Cardiac septum (tissue), 1 donor: ENCODE measurements at regions of chr7 and their contacts with region 1.

Region 1: DNA sequence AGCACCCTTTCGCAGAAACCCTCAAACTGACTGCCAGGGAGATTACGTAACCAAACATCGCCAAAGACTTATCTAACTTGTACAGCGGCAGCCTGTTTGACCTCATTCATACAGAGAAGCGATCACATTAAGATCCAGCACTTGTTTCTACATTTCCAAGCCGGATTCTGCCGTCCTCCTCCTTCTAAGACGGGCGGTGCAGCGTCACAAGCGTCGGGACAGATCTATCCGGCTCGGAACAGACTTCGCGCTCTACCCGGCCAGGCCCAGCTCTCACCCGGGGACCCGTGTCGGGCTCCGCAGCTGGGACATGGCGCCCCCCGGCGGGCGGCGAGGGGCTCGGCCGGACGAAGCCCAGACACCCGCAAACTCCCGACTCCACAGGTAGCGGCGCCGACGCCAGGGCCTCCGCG is 373 bp downstream of the H2AZ2 start:
- DNase-seq: peak; percentile 96

Region 2: DNA sequence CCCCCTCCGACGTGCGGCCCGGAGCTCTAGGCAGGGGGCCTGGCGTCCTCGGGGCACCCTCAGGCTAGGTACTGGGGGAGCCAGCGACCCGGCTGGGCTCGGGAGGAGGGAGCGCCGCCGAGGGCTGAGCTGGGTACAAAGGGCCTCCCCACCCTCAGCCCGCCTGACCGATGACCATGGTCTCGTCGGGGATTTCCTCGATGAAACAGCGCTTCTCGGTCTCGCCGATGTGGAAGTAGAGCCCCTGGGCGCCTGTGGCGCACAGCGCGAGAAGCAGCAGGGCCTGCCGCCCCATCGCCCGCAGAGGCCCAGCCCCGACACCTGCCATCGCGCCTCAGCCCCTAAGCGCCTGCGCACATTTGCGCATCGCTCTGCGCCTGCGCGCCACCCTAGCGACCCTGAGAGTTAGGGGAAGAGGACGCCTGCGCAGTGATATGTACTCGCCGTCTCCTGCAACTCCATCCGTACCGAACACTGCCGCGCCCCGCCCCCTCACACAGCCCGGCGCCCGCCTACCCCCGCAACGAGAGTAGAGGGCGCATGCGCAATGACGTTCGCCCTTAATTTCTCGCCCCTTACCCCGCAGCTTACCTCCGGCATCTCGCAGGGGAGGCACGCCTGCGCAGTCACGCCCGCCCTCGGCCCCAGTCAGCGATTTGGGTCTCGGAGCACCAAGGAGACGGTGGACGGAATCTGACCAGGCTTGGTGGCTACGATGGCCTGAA is 265.5 kb before region 1 on chr7 and contains the start of gene TMED4:
- intact Hi-C with region 1: loop called (anchors 1 kb)
- DNase-seq: peak; percentile 100
- total RNA-seq, gene TMED4: 73.8 TPM

Region 3: DNA sequence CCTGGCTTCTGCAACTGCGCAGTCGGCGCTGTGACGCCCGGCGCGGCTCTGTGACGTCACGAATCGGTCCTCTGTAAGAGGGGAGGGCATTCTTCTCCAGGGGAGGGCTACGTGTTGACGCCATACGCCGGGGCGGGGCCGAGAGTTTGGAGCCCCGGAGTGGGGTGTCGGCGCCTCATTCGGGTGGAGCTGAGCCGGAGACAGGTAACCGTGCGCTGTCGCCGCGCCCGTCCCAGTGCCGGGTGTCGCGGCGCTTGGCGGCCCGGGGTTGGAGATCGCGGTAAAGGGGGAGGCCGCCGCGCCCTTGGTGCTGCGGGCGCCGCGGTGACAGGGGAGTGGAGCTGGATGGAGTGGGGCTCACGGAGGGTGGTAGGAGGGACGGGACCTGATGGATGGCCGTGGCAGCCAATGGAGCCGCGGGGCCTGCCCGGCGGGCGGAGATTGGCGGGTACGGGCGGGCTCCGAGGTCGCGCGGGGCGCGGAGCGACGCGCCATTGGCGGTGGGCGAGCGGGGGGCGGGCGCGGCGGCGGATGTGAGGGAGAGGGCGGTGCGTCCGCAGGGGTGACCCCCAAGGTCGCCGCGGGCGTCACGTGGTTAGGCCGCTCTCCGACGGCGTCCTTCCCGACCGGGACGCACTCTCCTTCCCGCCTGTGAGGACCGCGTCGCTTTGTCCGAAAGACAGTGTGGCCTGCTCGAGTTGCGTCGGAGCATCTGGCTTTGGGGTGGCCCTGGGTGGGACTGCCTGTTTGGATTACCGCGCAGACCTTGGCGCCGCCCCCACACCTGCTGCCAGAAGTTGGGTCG is 240.9 kb before region 1 on chr7 and contains the start of gene OGDH:
- intact Hi-C with region 1: loop called (anchors 5 kb)
- DNase-seq: peak; percentile 100
- total RNA-seq, gene OGDH: 406 TPM

Region 4: DNA sequence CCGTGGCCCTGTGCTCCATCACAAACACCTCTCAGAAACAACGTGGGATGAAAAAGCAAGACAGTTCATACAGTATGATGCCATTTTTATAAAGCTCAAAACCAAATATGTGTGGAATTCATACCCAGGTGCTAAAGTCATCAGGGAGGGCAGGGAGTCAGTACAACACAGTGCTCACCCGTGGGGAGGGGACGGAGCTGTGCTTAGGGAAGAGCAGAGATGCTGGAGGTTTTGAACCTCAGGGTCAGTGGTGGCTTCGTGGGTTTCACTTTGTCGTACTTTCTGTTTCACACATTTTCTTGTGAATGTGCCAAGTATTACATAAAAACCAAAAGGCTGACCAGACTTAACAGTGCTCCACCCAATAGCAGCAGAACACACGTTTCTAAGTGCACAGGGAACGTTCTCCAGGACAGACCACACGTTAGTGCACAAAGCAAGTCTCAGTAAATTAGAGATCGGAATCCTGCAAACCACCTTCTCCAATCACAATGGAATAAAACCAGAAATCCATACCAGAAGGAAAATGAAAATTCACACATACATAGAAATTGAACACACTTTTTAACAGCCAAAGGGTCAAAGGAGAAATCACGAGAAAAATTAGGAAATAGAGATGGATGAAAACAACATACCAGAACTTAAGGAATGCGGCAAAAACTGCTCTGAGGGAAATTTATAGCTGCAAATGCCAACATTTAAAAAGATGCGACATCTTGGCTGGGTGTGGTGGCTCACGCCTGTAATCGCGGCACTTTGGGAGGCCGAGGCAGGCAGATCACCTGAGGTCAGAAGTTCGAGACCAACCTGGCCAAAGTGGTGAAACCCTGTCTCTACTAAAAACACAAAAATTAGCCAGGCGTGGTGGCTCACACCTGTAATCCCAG is 77.5 kb before region 1 on chr7:
- intact Hi-C with region 1: loop called (anchors 5 kb)
- DNase-seq: no peak

Region 5: GRCh38 chr7:44797329-44798251 is 49.9 kb before region 1 on chr7:
- intact Hi-C with region 1: loop called (anchors 2 kb)
- DNase-seq: peak; percentile 94

Region 6: GRCh38 chr7:44885394-44886317 is 38.1 kb after region 1 on chr7 and contains the start of gene PURB:
- intact Hi-C with region 1: loop called (anchors 2 kb)
- DNase-seq: peak; percentile 96
- total RNA-seq, gene PURB: 19.1 TPM